ENCODE measurements at regions of chr20 and their contacts with region 1.

Region 1: DNA sequence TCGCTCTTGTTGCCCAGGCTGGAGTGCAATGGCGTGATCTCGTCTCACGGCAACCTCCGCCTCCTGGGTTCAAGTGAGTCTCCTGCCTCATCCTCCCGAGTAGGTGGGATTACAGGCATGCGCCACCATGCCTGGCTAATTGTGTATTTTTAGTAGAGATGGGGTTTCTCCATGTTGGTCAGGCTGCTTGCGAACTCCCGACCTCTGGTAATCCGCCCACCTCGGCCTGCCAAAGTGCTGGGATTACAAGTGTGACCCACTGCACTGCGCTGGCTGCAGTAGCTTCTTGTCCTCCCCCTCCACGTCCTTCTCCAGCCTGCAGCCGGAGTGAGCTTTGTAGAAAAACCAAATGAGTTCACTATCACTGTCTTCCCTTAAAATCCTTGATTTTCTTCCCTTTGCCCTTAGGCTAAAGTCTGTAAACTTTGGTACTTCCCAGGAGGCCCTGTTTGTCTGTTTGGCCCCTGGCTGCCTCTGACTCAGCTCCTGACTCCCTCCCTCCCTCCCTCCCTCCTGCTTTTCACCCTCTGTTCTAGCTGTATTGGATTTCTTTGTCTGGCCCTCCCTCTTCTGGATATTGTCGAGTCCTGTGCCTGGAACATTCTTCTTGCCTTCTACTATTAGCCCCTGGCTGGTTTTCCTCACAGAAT is 12.9 kb downstream of the PARD6B start:
- DNase-seq: peak; percentile 34
- H3K4me3 Mint-ChIP-seq: no peak overlapping the region
- H3K27ac Mint-ChIP-seq: peak overlapping the region; percentile 78
- H3K4me1 Mint-ChIP-seq: peaks cover 39% of the 10 kb centered on the region
- H3K27me3 Mint-ChIP-seq: no peaks in the 10 kb centered on the region

Region 2: DNA sequence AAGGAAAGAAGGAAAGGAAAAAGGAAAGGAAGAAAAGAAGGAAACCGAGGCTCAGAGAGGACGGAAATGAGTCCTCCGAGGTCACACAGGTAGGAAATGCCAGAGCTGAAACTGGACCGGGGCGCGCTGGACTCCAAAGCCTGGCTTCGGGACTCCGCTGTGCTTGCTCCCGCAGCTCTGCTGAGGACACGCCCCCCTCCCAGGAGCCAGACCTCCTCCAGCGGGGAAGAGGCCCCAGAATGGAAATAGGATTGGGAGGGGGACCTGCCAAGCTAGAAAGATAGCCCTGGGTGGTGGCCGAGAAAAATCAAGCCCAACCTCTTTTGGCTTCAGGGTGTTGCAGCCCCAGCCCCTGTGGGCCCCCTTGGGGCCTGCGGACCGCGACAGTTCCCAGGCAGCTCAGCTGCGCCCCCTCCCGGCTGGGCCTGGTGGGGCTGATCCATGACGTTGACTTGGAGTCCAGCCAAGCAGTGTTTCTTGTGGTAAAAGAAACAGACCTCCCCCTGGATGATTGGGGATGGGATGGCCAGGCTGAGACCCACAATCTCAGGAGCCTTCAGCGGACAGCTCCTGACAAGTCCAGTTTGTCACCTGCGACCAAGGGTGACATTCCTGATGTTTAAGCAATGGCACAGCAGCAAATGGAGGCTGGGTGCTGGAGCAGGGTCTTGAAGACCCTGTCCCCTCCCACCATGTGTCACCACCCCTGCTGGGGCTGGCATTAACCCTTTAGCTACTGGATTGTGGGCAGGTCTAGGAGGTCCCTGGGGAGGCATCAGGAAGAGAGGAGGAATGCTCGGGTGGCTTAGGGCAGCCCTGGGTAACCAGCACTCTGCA is 108.4 kb before region 1 on chr20:
- CTCF ChIA-PET with region 1: interaction called, 10 read pairs
- POLR2A ChIA-PET with region 1: no interaction called
- intact Hi-C with region 1: loop called (anchors 10 kb)
- DNase-seq: peak; percentile 75
- H3K4me3 Mint-ChIP-seq: no peak overlapping the region
- H3K27ac Mint-ChIP-seq: no peak overlapping the region
- H3K4me1 Mint-ChIP-seq: no peaks in the 10 kb centered on the region
- H3K27me3 Mint-ChIP-seq: peaks cover 3% of the 10 kb centered on the region

Region 3: DNA sequence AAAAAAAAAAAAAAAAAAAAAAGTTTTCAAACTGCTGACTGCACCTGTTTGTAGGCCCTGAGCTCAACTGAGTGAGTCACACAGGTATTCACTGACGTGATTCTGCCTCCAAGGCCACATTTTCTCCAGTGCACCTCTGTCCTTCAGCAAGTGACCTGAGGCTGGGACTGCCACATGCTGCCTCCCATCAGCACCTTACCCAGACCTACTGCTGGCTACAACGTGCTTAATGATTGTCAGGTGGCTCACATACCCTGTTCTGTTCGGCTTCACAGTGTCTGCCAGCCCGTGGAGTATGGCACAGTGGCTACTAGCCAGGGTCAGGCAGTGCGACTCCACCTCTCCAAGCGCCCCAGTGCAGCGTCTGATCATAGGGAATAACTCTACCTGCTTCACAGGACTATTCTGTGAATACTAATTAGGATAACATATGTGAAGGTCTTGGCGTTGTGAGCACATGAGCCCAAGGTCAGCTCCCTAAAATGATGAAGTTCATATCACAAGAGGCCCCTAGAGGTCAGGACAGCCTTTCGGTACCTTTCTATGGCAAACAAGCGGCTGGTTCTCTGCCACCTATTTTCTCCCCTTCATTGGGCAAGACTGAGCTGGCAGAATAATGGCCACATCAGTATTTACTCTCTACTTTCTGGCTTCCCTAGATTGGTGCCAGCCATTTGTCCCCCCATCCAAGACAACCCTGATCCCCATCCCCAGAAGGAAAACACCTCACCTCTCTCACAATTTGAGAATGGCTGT is 81.0 kb before region 1 on chr20:
- CTCF ChIA-PET with region 1: interaction called, 33 read pairs
- POLR2A ChIA-PET with region 1: no interaction called
- intact Hi-C with region 1: loop called (anchors 2 kb)
- DNase-seq: peak; percentile 27
- H3K4me3 Mint-ChIP-seq: no peak overlapping the region
- H3K27ac Mint-ChIP-seq: no peak overlapping the region
- H3K4me1 Mint-ChIP-seq: no peaks in the 10 kb centered on the region
- H3K27me3 Mint-ChIP-seq: peaks cover 2% of the 10 kb centered on the region

Region 4: DNA sequence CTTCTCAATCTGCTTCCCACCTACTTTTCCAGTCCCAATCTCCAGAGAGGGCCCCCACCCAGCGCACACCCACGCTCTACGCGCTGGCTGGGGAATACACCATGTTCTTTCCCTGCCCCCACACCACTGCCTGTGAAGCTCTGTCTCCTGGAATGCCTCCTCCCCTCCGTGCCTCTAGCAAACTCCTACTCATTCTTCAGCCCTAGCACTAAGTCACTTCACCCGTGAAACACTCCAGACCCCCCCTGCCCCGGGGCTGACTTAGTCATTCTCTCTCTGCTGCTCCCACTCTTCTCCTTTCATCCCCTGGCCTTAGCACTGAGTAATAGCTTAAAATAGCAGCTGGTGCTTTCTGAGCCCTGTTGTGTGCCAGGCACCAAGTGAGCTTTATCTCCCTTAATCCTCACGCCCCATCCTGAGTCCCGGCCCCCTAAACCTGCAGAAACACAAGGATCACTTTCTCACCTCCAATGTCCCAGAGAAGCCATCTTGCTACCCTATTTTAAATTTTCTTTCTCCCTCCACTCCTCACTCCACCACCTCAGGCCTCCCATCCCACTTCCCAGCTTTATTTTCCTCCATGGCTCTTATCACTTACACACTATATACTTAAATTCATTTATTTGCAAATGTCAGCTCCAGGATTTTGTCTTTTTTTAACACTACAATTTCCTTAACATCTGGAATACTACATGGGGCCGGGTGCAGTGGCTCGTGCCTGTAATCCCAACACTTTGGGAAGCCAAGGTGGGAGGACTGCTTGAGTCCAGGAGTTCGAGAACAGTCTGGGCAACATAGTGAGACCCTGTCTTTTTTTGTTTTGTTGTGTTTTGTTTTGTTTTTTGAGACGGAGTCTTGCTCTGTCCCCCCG is 19.2 kb before region 1 on chr20:
- CTCF ChIA-PET with region 1: interaction called, 23 read pairs
- POLR2A ChIA-PET with region 1: interaction called, 4 read pairs
- intact Hi-C with region 1: loop called (anchors 1 kb)
- DNase-seq: peak; percentile 91
- H3K4me3 Mint-ChIP-seq: no peak overlapping the region
- H3K27ac Mint-ChIP-seq: no peak overlapping the region
- H3K4me1 Mint-ChIP-seq: peaks cover 28% of the 10 kb centered on the region
- H3K27me3 Mint-ChIP-seq: no peaks in the 10 kb centered on the region

Region 5: GRCh38 chr20:50731055-50731871 is 13.0 kb before region 1 on chr20 and contains the start of gene PARD6B:
- CTCF ChIA-PET with region 1: interaction called, 21 read pairs
- POLR2A ChIA-PET with region 1: no interaction called
- intact Hi-C with region 1: loop called (anchors 1 kb)
- DNase-seq: peak; percentile 100
- H3K4me3 Mint-ChIP-seq: peak within 1 kb of the TSS; percentile 87
- H3K27ac Mint-ChIP-seq: peak within 1 kb of the TSS; percentile 65
- H3K4me1 Mint-ChIP-seq: peaks cover 59% of the 10 kb centered on the region
- H3K27me3 Mint-ChIP-seq: no peaks in the 10 kb centered on the region
- total RNA-seq, gene PARD6B: 6.3 to 8.2 TPM

Region 6: DNA sequence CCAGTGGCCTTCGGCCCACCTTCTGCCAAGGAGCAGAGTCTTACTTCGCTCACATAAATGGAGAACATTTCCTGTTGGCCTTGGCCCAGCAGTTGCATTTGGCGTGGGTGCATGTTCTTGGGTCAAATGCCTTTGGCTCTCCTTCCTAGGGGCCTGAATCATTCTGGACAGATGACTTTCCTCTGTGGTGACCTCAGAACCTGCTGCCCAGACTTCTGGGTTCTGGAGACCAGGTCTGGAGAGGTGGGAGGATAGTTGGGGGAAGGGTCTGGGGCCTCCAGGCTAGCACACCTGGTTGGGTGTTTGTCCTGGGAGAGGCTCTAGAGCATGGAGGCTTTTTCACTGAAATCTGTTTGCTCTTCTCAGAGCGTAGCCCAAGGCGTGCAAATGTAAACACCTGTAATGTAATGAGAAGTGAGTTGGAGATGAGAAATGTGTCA is 79.9 kb after region 1 on chr20:
- CTCF ChIA-PET with region 1: no interaction called
- POLR2A ChIA-PET with region 1: no interaction called
- intact Hi-C with region 1: no loop called
- DNase-seq: no peak
- H3K4me3 Mint-ChIP-seq: no peak overlapping the region
- H3K27ac Mint-ChIP-seq: no peak overlapping the region
- H3K4me1 Mint-ChIP-seq: no peaks in the 10 kb centered on the region
- H3K27me3 Mint-ChIP-seq: no peaks in the 10 kb centered on the region

Region 7: GRCh38 chr20:50891138-50891537 is 146.9 kb after region 1 on chr20:
- CTCF ChIA-PET with region 1: no interaction called
- POLR2A ChIA-PET with region 1: no interaction called
- intact Hi-C with region 1: no loop called
- DNase-seq: no peak
- H3K4me3 Mint-ChIP-seq: no peak overlapping the region
- H3K27ac Mint-ChIP-seq: peak overlapping the region; percentile 28
- H3K4me1 Mint-ChIP-seq: peaks cover 30% of the 10 kb centered on the region
- H3K27me3 Mint-ChIP-seq: no peaks in the 10 kb centered on the region

Region 8: GRCh38 chr20:50959543-50960126 is 215.4 kb after region 1 on chr20:
- CTCF ChIA-PET with region 1: no interaction called
- POLR2A ChIA-PET with region 1: no interaction called
- intact Hi-C with region 1: no loop called
- DNase-seq: no peak
- H3K4me3 Mint-ChIP-seq: peak overlapping the region; percentile 91
- H3K27ac Mint-ChIP-seq: peak overlapping the region; percentile 98
- H3K4me1 Mint-ChIP-seq: peaks cover 48% of the 10 kb centered on the region
- H3K27me3 Mint-ChIP-seq: no peaks in the 10 kb centered on the region